ENCODE measurements at regions of chr17 and their contacts with region 1.

Region 1: DNA sequence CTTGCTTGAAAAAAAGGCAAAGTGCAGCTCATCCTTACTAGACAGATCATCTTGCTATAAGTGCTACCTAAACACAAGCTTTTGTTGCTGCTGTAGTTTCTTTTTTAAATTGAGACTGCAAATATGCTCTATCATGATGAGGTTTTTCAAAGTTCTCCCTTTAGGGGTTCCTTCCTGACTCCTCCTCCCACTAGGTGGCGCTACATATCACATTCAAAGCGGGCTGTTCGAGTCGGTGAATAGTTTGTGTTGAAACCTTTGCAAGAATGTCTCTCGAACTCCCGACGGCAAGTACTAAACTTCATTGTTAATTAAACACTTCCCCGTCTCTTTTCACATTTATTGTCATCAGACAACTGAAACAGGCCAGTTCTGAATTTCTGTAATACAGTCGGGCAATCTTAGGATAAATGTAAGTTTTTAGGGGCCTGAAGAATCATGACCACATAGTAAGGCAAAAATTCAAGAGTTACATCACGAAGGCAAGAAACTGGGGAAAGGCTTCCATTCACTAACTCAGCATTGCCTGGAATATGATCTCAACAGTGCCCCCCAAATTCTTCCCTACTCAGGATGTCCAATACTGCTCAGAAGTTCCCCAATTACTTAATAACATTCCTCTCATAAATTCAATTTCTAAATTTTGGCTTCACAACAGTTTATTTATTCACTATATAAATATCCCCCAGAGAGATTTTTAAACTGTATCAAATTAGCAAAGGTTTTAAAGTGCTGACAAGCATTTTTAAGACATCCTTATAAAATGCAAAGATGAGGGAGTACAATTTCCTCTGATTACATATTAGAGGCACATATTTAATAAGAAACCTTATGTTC is 6.7 kb downstream of the HS3ST3A1 start:
- H3K4me3 Mint-ChIP-seq: no peak overlapping the region
- H3K27ac Mint-ChIP-seq: no peak overlapping the region
- H3K4me1 Mint-ChIP-seq: peaks cover 7% of the 10 kb centered on the region
- H3K27me3 Mint-ChIP-seq: peaks cover 42% of the 10 kb centered on the region

Region 2: GRCh38 chr17:13557077-13557476 is 37.9 kb before region 1 on chr17:
- intact Hi-C with region 1: no loop called
- H3K4me3 Mint-ChIP-seq: no peak overlapping the region
- H3K27ac Mint-ChIP-seq: no peak overlapping the region
- H3K4me1 Mint-ChIP-seq: no peaks in the 10 kb centered on the region
- H3K27me3 Mint-ChIP-seq: no peaks in the 10 kb centered on the region

Region 3: GRCh38 chr17:13940858-13941665 is 346.1 kb after region 1 on chr17:
- intact Hi-C with region 1: loop called (anchors 5 kb)
- H3K4me3 Mint-ChIP-seq: no peak overlapping the region
- H3K27ac Mint-ChIP-seq: no peak overlapping the region
- H3K4me1 Mint-ChIP-seq: peaks cover 5% of the 10 kb centered on the region
- H3K27me3 Mint-ChIP-seq: peaks cover 4% of the 10 kb centered on the region

Region 4: DNA sequence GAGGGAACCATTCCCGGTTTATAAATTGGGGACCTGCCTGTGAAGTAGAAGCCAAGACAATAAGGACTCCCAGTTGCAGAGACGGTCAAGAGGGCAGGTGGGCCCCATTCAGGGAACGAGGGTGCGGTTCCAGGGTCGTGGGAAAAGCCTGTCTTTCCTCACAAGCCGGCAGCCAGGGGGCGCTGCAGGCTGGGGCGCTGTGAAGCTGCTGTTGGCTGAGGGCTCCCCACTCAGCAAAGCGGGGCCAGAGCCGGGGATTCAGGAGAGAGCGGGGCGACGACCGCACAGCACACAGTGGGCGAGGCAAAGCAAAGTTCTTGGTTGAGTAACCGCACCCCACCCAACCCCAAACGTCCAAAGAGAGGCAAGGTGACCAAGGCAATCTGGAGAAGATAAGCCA is 616.8 kb after region 1 on chr17:
- intact Hi-C with region 1: loop called (anchors 10 kb)
- H3K4me3 Mint-ChIP-seq: no peak overlapping the region
- H3K27ac Mint-ChIP-seq: no peak overlapping the region
- H3K4me1 Mint-ChIP-seq: peaks cover 29% of the 10 kb centered on the region
- H3K27me3 Mint-ChIP-seq: peaks cover 2% of the 10 kb centered on the region

Region 5: GRCh38 chr17:14813649-14814365 is 1218.8 kb after region 1 on chr17:
- intact Hi-C with region 1: loop called (anchors 10 kb)
- H3K4me3 Mint-ChIP-seq: no peak overlapping the region
- H3K27ac Mint-ChIP-seq: no peak overlapping the region
- H3K4me1 Mint-ChIP-seq: peaks cover 6% of the 10 kb centered on the region
- H3K27me3 Mint-ChIP-seq: no peaks in the 10 kb centered on the region

Region 6: GRCh38 chr17:14926526-14927122 is 1331.6 kb after region 1 on chr17:
- intact Hi-C with region 1: loop called (anchors 1 kb)
- H3K4me3 Mint-ChIP-seq: no peak overlapping the region
- H3K27ac Mint-ChIP-seq: no peak overlapping the region
- H3K4me1 Mint-ChIP-seq: no peaks in the 10 kb centered on the region
- H3K27me3 Mint-ChIP-seq: no peaks in the 10 kb centered on the region

Region 7: GRCh38 chr17:15171167-15172047 is 1576.4 kb after region 1 on chr17:
- intact Hi-C with region 1: loop called (anchors 5 kb)
- H3K4me3 Mint-ChIP-seq: no peak overlapping the region
- H3K27ac Mint-ChIP-seq: no peak overlapping the region
- H3K4me1 Mint-ChIP-seq: no peaks in the 10 kb centered on the region
- H3K27me3 Mint-ChIP-seq: no peaks in the 10 kb centered on the region

Region 8: DNA sequence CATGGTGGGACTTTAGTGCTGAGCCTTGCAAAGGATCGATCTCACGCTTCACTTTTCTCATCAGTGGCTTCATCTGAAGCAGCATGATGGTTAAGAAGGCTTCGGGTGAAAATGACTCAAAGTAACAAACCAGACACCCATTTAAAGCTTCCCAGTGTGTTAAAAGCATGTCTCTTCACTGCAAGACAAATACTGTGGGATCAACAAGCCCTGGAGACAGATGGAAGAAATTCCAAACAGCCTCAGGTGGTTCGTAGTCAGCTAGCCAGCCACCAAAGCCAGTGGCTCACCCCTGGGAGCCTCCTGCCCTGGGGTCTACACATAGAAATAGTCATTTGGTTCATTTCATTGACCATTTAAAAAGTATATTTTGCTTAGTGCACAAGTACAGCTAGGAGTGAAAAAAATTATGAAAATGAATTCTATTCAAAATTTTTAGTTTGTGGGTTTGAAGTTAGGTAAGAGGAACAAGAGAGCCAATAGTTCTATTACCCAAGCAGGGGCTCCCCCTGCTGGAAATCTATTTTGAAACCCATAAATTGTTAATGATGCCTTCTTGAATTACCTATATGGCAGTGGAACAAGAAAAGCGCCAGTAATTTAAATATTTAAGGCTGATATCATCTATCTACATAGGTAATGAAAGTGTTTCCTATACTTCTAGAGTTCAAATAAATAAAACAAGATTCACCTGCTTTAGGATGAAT is 1618.6 kb after region 1 on chr17:
- intact Hi-C with region 1: loop called (anchors 10 kb)
- H3K4me3 Mint-ChIP-seq: no peak overlapping the region
- H3K27ac Mint-ChIP-seq: no peak overlapping the region
- H3K4me1 Mint-ChIP-seq: no peaks in the 10 kb centered on the region
- H3K27me3 Mint-ChIP-seq: peaks cover 16% of the 10 kb centered on the region

Measured in dendritic cell treated with granulocyte-macrophage colony-stimulating factor and Interleukin-4, amounts not matched to agents 40 ng/mL and 50 ng/mL, for 4 days (primary cell).